A673 (cell line): ENCODE measurements at regions of chr19 and their contacts with region 1.

Region 1: GRCh38 chr19:19627621-19628500 is at the start of gene LPAR2:
- DNase-seq: peak; percentile 55
- H3K4me3 ChIP-seq: peak within 1 kb of the TSS; percentile 80
- H3K27ac ChIP-seq: peak within 1 kb of the TSS; percentile 65
- H3K4me1 ChIP-seq: peaks cover 17% of the 10 kb centered on the region
- H3K27me3 ChIP-seq: no peaks in the 10 kb centered on the region
- CTCF ChIP-seq: no peak
- total RNA-seq, gene LPAR2: 17.2 and 20.6 TPM in 2 replicates

Region 2: GRCh38 chr19:19591133-19591825 is 36.6 kb before region 1 on chr19:
- CTCF ChIA-PET with region 1: no interaction called
- POLR2A ChIA-PET with region 1: no interaction called
- intact Hi-C with region 1: loop called (anchors 2 kb)
- DNase-seq: peak; percentile 89
- H3K4me3 ChIP-seq: no peak overlapping the region
- H3K27ac ChIP-seq: peak overlapping the region; percentile 77
- H3K4me1 ChIP-seq: peaks cover 20% of the 10 kb centered on the region
- H3K27me3 ChIP-seq: no peaks in the 10 kb centered on the region
- CTCF ChIP-seq: no peak